Heart left ventricle (tissue), 16 donors: ENCODE measurements at regions of chr18 and their contacts with region 1.

Region 1: GRCh38 chr18:9334329-9334972 is at the start of gene TWSG1:
- DNase-seq: peak; percentile 92 to 97 (median 95)
- ATAC-seq: peak; percentile 89 to 97 (median 96)
- H3K4me3 ChIP-seq: peak within 1 kb of the TSS; percentile 66 to 93 (median 82)
- H3K27ac ChIP-seq: peak within 1 kb of the TSS in 11 of 12 donors; percentile 64 to 89 (median 69)
- H3K4me1 ChIP-seq: peaks cover 0 to 31% (median 10%) of the 10 kb centered on the region in 12 donors
- H3K27me3 ChIP-seq: no peaks in the 10 kb centered on the region
- CTCF ChIP-seq: peak; percentile 20 to 65 (median 52)
- POLR2A ChIP-seq: peak in 1 of 2 donors; percentile 61
- total RNA-seq, gene TWSG1: 9.0 to 18.0 (median 13.6) TPM

Region 2: GRCh38 chr18:9079818-9080528 is 254.5 kb before region 1 on chr18:
- intact Hi-C with region 1: loop called in 6 of 10 experiments (anchors 10 kb)
- DNase-seq: no peak
- ATAC-seq: peak in 2 of 4 donors; percentile 41 to 55
- H3K4me3 ChIP-seq: no peak overlapping the region
- H3K27ac ChIP-seq: peak overlapping the region in 2 of 12 donors; percentile 13 to 84
- H3K4me1 ChIP-seq: peaks cover 0 to 48% (median 0%) of the 10 kb centered on the region in 12 donors
- H3K27me3 ChIP-seq: no peaks in the 10 kb centered on the region
- CTCF ChIP-seq: no peak
- POLR2A ChIP-seq: no peak

Region 3: GRCh38 chr18:9172506-9173127 is 161.8 kb before region 1 on chr18:
- intact Hi-C with region 1: no loop called
- DNase-seq: no peak
- ATAC-seq: no peak
- H3K4me3 ChIP-seq: no peak overlapping the region
- H3K27ac ChIP-seq: no peak overlapping the region
- H3K4me1 ChIP-seq: peaks cover 0 to 64% (median 25%) of the 10 kb centered on the region in 12 donors
- H3K27me3 ChIP-seq: no peaks in the 10 kb centered on the region
- CTCF ChIP-seq: no peak
- POLR2A ChIP-seq: no peak

Region 4: GRCh38 chr18:9217743-9218451 is 116.6 kb before region 1 on chr18:
- intact Hi-C with region 1: loop called in 1 of 10 experiments (anchors 5 kb)
- DNase-seq: no peak
- ATAC-seq: peak in 3 of 4 donors; percentile 52 to 81 (median 81)
- H3K4me3 ChIP-seq: no peak overlapping the region
- H3K27ac ChIP-seq: no peak overlapping the region
- H3K4me1 ChIP-seq: peaks cover 0 to 12% (median 0%) of the 10 kb centered on the region in 12 donors
- H3K27me3 ChIP-seq: no peaks in the 10 kb centered on the region
- CTCF ChIP-seq: no peak
- POLR2A ChIP-seq: no peak

Region 5: DNA sequence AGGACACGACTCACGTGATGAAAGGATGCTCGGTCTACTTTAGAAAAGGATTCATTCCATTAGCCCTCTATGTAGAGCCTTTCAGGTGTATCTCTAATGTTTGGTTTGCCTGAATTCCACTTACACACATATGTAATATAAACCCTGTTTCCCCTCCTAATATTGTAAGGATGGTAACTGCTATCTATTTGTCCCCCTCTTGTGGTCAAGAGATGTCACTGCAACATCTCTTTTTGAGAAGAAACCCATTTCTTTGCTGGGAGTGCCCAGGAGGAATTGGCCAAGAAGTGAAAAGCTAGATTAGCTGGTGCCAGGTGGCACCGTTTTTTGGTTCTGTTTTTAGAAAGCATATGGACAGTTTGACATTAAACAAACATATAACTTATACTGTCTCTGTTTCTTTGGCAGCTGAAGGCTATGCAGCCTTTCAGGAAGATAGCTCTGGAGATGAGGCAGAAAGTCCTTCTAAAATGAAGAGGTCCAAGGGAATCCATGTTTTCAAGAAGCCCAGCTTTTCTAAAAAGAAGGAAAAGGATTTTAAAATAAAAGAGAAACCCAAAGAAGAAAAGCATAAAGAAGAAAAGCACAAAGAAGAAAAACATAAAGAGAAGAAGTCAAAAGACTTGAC is 182.1 kb after region 1 on chr18:
- intact Hi-C with region 1: loop called in 1 of 10 experiments (anchors 10 kb)
- DNase-seq: no peak
- ATAC-seq: peak in 1 of 4 donors; percentile 46
- H3K4me3 ChIP-seq: no peak overlapping the region
- H3K27ac ChIP-seq: peak overlapping the region in 1 of 12 donors; percentile 38
- H3K4me1 ChIP-seq: peaks cover 0 to 31% (median 1%) of the 10 kb centered on the region in 12 donors
- H3K27me3 ChIP-seq: no peaks in the 10 kb centered on the region
- CTCF ChIP-seq: peak; percentile 76 to 89 (median 82)
- POLR2A ChIP-seq: no peak